ENCODE measurements at regions of chr6 and their contacts with region 1.

Region 1: GRCh38 chr6:104525677-104526312 is 333.9 kb downstream of the HACE1 start:
- DNase-seq: peak; percentile 79
- ATAC-seq: peak; percentile 100
- H3K4me3 Mint-ChIP-seq: peak overlapping the region; percentile 54
- H3K27ac Mint-ChIP-seq: no peak overlapping the region
- H3K4me1 Mint-ChIP-seq: peaks cover 4% of the 10 kb centered on the region
- H3K27me3 Mint-ChIP-seq: peaks cover 3% of the 10 kb centered on the region
- CTCF ChIP-seq: peak; percentile 88

Region 2: DNA sequence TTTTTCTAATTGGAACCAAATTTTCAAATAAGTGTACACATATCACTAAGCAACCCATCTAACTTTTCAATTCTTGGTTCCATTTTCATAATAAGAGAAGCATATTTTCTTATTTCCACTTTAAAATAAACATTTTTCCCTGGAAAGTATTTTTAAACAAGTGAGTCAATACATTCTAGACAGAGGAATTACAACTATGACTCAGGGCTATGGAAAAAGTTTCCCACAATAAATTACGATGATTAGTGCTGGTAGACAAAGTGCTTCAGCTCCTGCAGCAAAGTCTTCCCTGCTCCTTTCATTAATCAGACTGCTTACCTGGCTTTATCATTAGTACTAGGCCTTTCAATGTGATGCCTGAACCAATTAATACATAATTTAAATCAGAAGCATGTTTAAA is 11.4 kb after region 1 on chr6:
- CTCF ChIA-PET with region 1: interaction called, 11 read pairs
- POLR2A ChIA-PET with region 1: no interaction called
- intact Hi-C with region 1: no loop called
- DNase-seq: no peak
- ATAC-seq: no peak
- H3K4me3 Mint-ChIP-seq: no peak overlapping the region
- H3K27ac Mint-ChIP-seq: no peak overlapping the region
- H3K4me1 Mint-ChIP-seq: no peaks in the 10 kb centered on the region
- H3K27me3 Mint-ChIP-seq: peaks cover 10% of the 10 kb centered on the region
- CTCF ChIP-seq: no peak

Region 3: DNA sequence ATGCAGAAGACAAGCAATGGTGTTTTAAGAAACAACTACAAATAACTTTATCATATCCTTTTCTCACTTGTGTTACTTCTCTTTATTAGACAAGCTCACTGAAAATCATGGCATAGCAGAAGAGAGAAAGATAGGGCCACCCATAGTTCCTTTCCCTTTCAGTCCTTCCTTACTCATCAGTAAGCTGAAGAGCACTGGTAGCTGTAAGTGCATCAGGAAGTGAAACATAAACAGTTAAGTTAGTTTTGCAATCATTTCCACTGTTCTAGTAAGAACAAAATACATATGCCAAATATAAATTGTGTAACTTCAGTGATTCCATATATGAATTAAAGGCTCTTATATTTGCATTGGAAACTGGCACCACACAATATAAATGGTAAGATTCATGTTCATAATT is 113.9 kb after region 1 on chr6:
- CTCF ChIA-PET with region 1: no interaction called
- POLR2A ChIA-PET with region 1: no interaction called
- intact Hi-C with region 1: no loop called
- DNase-seq: no peak
- ATAC-seq: no peak
- H3K4me3 Mint-ChIP-seq: no peak overlapping the region
- H3K27ac Mint-ChIP-seq: no peak overlapping the region
- H3K4me1 Mint-ChIP-seq: peaks cover 3% of the 10 kb centered on the region
- H3K27me3 Mint-ChIP-seq: no peaks in the 10 kb centered on the region
- CTCF ChIP-seq: no peak

Region 4: DNA sequence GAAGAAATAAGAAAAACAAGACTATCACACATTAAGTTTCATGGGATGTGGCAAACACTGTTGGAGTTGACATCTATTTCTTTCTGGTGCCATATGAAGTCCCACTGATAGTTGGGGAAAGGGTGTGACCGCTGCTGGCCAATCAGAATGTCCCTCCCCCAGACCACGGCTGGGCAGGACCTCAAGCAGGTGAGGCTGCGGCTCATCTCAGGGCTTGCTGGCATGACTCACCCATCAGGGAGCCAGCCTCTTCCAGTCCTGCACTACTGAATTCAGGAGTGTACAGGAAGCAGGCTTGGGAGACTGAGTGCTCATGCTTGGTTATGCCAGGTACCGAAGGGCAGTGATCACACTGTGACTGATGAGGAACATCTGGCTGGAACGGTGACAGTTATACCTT is 858.2 kb after region 1 on chr6:
- CTCF ChIA-PET with region 1: no interaction called
- POLR2A ChIA-PET with region 1: no interaction called
- intact Hi-C with region 1: no loop called
- DNase-seq: peak; percentile 10
- ATAC-seq: no peak
- H3K4me3 Mint-ChIP-seq: no peak overlapping the region
- H3K27ac Mint-ChIP-seq: no peak overlapping the region
- H3K4me1 Mint-ChIP-seq: peaks cover 40% of the 10 kb centered on the region
- H3K27me3 Mint-ChIP-seq: no peaks in the 10 kb centered on the region
- CTCF ChIP-seq: no peak

Measured in activated CD8-positive, alpha-beta T cell treated with anti-CD3 and anti-CD28 coated beads for 36 hours (primary cell).